ENCODE measurements at regions of chr17 and their contacts with region 1.

Region 1: GRCh38 chr17:40909351-40909750 is 24.3 kb upstream of the KRT20 start:
- DNase-seq: peak; percentile 89
- H3K4me3 ChIP-seq: no peak overlapping the region
- H3K4me3 Mint-ChIP-seq: no peak overlapping the region
- H3K27ac Mint-ChIP-seq: peak overlapping the region; percentile 87
- H3K4me1 ChIP-seq: peaks cover 32% of the 10 kb centered on the region
- H3K4me1 Mint-ChIP-seq: peaks cover 36% of the 10 kb centered on the region
- H3K27me3 ChIP-seq: no peaks in the 10 kb centered on the region
- H3K27me3 Mint-ChIP-seq: no peaks in the 10 kb centered on the region
- CTCF ChIP-seq: peak; percentile 78 to 87

Region 2: DNA sequence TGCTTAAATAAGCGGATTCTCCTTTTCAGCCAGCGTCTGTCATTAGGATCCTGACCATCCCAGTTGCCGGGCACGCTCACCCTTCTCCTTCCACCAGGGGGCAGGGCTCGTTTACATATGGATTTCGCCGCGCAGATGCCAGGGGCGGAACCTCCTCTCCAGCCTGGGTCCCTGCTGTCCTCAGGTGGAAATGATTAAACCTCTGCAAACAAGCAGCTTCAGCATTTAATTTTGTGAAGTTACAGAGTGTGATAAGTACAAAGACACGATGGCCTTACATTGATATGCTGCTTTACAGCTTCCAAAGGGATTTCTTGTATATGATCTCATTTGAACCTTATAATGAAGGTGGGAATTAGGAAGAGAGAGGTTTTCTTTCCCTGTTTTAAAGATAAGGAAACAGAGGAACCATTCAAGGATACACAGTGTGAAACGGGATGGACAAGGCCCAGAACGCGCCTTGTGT is 105.7 kb before region 1 on chr17:
- CTCF ChIA-PET with region 1: no interaction called
- POLR2A ChIA-PET with region 1: no interaction called
- intact Hi-C with region 1: loop called (anchors 1 kb)
- DNase-seq: peak; percentile 87 to 91
- H3K4me3 ChIP-seq: no peak overlapping the region
- H3K4me3 Mint-ChIP-seq: no peak overlapping the region
- H3K27ac Mint-ChIP-seq: no peak overlapping the region
- H3K4me1 ChIP-seq: 0 out of 2 replicates have a peak, but pooled peaks cover 5% of the 10 kb centered on the region
- H3K4me1 Mint-ChIP-seq: no peaks in the 10 kb centered on the region
- H3K27me3 ChIP-seq: no peaks in the 10 kb centered on the region
- H3K27me3 Mint-ChIP-seq: peaks cover 4% of the 10 kb centered on the region
- CTCF ChIP-seq: peak; percentile 96

Region 3: DNA sequence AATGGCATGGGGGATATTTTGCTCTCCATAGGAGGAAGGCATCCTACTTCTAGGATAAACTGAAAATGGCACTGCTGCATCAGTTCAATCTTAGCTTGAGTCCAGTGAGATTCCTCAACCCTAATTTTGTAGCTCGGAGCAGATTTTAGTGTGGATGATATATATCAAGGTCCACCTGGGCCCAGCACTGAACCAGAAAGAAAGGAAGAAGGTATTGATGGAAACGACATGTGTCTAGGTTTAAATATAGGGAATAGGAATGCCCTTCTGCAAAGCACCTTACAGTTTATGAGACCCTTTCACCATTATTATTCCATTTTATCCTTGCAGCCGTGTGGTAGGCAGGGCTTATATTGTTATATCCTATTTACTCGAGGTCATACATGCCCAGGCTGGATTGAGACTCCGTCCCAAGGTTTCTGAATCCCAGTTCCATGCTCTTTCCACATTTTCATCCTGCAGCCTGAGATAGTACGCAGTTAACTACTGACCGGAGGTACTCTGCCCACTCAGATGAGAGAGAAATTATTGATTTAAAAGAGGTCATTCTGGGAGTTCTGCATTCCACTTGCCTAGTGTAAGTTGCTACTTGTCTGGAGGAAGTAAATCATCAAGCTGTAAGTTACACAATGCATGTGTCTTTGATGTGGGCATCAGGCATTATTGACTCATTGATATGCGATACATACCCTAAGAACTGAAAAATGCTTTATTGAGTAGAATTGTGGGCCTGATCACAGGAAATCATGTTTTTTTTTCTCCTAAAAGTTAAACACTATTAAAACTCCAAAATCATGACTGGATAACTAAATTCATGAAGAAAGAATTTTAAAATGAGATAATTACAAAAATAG is 47.3 kb after region 1 on chr17:
- CTCF ChIA-PET with region 1: no interaction called
- POLR2A ChIA-PET with region 1: no interaction called
- intact Hi-C with region 1: loop called (anchors 1 kb)
- DNase-seq: peak; percentile 75 to 82
- H3K4me3 ChIP-seq: no peak overlapping the region
- H3K4me3 Mint-ChIP-seq: peak overlapping the region; percentile 62
- H3K27ac Mint-ChIP-seq: peak overlapping the region; percentile 89
- H3K4me1 ChIP-seq: peaks cover 79% of the 10 kb centered on the region
- H3K4me1 Mint-ChIP-seq: peaks cover 72% of the 10 kb centered on the region
- H3K27me3 ChIP-seq: no peaks in the 10 kb centered on the region
- H3K27me3 Mint-ChIP-seq: no peaks in the 10 kb centered on the region
- CTCF ChIP-seq: no peak

Region 4: DNA sequence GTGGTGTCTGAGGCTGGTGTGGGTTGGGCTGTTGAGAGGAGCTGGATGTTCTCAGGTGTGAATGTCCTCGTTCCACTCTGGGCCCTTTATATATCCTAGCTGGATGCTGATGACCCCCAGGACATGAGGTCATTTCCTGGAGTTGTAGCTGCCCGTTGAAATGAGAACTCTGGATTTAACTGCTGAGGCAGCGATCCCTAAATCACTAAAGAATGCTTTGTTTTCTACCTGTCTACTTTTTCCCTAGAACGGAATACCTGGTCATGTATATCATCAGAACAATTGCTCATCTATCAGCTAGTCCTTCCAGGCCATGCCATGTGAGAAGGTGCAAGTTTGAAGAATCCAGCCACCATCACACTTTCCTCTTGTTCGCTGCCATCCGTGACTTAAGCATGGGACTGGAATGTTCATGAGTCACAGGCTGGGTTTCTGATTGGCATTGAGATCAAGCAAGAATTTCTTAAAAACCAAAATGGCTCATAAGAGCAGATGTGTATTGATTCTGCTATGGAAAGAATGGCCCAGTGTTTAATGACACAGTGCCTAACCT is 150.8 kb after region 1 on chr17 and contains the start of gene KRTAP2-3:
- CTCF ChIA-PET with region 1: interaction called, 3 read pairs
- POLR2A ChIA-PET with region 1: interaction called, 4 read pairs
- intact Hi-C with region 1: loop called (anchors 1 kb)
- DNase-seq: peak in 1 of 2 experiments; percentile 24
- H3K4me3 ChIP-seq: peak within 1 kb of the TSS; percentile 22; the same call in 1 of the 2 replicates
- H3K4me3 Mint-ChIP-seq: peak within 1 kb of the TSS; percentile 68
- H3K27ac Mint-ChIP-seq: peak within 1 kb of the TSS; percentile 76
- H3K4me1 ChIP-seq: peaks cover 49% of the 10 kb centered on the region
- H3K4me1 Mint-ChIP-seq: peaks cover 45% of the 10 kb centered on the region
- H3K27me3 ChIP-seq: no peaks in the 10 kb centered on the region
- H3K27me3 Mint-ChIP-seq: no peaks in the 10 kb centered on the region
- CTCF ChIP-seq: no peak
- total RNA-seq, gene KRTAP2-3: 3.7 and 4.9 TPM in 2 replicates

Region 5: GRCh38 chr17:41322094-41322902 is 412.9 kb after region 1 on chr17:
- CTCF ChIA-PET with region 1: interaction called, 8 read pairs
- POLR2A ChIA-PET with region 1: no interaction called
- intact Hi-C with region 1: loop called (anchors 1 kb)
- DNase-seq: peak in 1 of 2 experiments; percentile 35
- H3K4me3 ChIP-seq: no peak overlapping the region
- H3K4me3 Mint-ChIP-seq: no peak overlapping the region
- H3K27ac Mint-ChIP-seq: peak overlapping the region; percentile 76
- H3K4me1 ChIP-seq: peaks cover 4% of the 10 kb centered on the region; the same call in 1 of the 2 replicates
- H3K4me1 Mint-ChIP-seq: peaks cover 10% of the 10 kb centered on the region
- H3K27me3 ChIP-seq: no peaks in the 10 kb centered on the region
- H3K27me3 Mint-ChIP-seq: no peaks in the 10 kb centered on the region
- CTCF ChIP-seq: peak; percentile 75 to 86

Region 6: DNA sequence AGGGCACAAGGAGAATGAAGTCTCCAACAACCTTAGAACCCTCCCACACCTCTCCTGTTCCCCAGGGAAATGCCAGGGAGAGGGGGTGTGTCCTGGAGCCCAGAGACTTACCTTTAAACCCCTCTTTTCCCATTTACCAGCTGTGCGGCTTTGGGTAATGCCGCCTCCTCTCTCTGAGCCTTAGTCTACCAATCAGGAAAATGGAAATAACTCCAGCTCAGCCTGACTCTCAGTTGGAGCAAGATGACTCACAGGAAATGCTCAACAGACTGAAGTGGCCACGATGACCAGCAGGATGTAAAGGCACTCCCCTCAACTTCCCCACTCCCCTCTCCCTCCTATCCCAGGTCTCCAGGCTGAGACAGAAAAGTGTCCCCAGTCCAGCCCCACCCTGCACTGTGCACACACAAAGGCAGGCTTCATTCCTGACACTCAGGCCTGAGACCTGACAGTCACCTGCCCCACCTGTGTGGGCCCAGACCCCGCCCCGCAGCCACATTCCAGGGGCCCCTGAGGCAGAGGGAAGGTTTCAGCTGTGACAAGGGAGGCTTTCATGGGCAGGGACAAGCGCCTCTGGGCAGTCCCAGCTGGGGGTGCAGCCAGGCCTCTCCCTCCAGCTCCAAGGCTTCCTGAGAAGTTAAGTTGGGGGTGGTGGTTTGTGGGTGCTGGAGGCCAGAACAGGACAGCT is 612.4 kb after region 1 on chr17:
- CTCF ChIA-PET with region 1: no interaction called
- POLR2A ChIA-PET with region 1: no interaction called
- intact Hi-C with region 1: loop called (anchors 5 kb)
- DNase-seq: peak; percentile 97 to 99
- H3K4me3 ChIP-seq: no peak overlapping the region
- H3K4me3 Mint-ChIP-seq: peak overlapping the region; percentile 68
- H3K27ac Mint-ChIP-seq: peak overlapping the region; percentile 97
- H3K4me1 ChIP-seq: peaks cover 66% of the 10 kb centered on the region
- H3K4me1 Mint-ChIP-seq: peaks cover 51% of the 10 kb centered on the region
- H3K27me3 ChIP-seq: no peaks in the 10 kb centered on the region
- H3K27me3 Mint-ChIP-seq: no peaks in the 10 kb centered on the region
- CTCF ChIP-seq: no peak